ENCODE measurements at regions of chr1 and their contacts with region 1.

Region 1: DNA sequence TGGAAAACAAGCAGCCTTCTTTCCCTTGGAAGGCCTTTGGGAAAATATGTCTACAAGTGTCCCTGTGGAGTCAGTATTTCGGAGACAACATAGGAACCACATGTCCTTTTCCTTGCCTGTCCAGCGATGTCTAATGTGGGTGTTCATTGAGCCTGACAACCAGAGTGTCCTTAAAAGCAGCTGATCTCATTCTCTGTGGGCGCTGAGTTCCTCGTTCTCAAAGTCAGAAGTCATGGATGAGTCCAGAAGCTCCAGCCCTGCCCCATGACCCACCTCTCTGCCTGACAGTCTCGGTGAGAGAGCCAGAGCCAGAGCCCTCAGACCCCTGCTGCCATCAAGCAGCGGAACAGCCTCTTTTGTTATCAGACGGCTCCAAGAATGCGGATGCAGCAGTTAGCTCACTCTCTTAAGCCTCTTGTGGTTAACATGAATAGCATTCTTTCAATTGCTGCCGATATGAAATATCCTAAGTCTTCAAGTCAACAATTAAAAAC is 329.2 kb downstream of the TGFB2 start:
- DNase-seq: peak; percentile 90 to 92
- H3K4me3 ChIP-seq: no peak overlapping the region
- H3K27ac ChIP-seq: no peak overlapping the region
- H3K4me1 ChIP-seq: 0 out of 2 replicates have a peak, but pooled peaks cover 13% of the 10 kb centered on the region
- H3K27me3 ChIP-seq: no peaks in the 10 kb centered on the region
- CTCF ChIP-seq: no peak

Region 2: DNA sequence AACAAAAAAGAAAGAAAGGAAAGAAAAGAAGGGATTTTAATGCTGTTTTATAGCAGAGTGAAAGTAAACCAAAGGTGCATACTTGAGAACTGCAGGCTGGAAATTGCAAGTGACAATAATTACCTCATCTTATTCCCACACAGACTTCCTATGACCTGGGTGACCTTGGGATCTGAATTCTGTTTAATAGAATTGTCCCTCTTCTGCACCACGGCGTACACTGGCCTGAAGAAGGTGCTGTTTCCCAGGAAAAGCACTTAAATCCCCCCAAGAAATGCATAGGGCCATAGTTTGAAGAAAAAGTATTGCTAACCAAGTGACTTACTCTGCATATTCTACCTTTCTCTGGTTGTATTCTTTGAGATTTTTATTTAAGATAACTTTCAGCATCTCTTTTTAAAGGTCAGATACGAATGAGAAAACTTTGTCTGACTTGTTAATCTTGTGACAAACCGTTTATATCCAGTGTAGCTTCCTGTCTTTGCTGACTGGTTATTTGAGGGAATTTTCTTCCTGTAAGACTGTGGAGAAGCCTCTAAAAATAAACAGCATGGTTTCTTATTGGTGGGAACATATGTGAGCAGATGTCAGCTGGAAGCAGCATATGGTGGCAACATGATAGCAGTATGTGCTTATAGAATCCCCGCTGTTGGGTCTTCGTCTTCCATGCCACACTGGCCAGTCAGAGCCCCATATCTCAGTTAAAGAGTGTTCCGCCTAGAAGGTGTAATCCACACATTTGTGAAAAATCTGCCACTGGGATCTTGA is 312.8 kb before region 1 on chr1:
- CTCF ChIA-PET with region 1: no interaction called
- POLR2A ChIA-PET with region 1: no interaction called
- intact Hi-C with region 1: loop called (anchors 1 kb)
- DNase-seq: no peak
- H3K4me3 ChIP-seq: no peak overlapping the region
- H3K27ac ChIP-seq: no peak overlapping the region
- H3K4me1 ChIP-seq: 0 out of 2 replicates have a peak, but pooled peaks cover 6% of the 10 kb centered on the region
- H3K27me3 ChIP-seq: no peaks in the 10 kb centered on the region
- CTCF ChIP-seq: peak; percentile 52

Region 3: DNA sequence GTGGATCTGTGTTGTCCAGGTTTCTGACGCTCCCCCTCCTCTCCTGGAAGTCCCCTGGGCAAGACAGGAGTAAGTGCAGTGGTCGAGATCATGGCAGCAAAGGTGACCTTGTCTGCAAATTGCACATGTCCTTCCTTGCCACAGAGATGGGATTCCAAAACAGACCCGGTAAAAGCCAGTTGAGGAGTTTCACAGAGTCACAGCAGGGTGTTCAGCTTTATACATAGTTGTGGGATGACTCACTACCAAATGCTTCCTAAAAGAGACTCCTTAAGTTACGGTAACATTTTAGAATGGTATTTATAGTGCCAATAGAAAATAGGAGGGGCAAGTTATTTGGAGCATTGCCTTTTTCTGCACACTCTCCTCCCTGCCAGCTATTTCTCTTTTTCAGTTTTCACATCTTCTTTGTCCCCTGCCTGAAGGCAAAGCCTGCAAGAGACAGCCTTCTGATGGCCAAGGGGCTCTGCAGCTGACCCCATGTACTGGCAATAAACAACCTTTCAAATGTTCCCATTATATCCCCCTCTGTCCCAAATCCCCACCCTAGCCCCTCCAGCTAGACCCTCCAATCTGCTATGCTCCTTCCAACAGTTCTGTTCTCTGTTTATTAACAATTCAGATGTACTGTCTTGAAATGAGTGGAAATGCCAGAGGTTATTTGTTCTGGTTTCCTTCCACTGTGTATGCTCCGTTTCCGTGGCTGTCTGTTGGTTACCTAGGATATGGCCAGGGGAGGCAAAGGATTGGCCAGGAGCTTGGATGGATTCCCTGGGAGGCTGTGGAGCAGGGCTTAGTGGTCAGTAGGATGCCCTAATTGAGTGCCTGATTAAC is 214.2 kb before region 1 on chr1:
- CTCF ChIA-PET with region 1: no interaction called
- POLR2A ChIA-PET with region 1: no interaction called
- intact Hi-C with region 1: loop called (anchors 2 kb)
- DNase-seq: peak; percentile 68 to 93
- H3K4me3 ChIP-seq: no peak overlapping the region
- H3K27ac ChIP-seq: peak overlapping the region; percentile 63
- H3K4me1 ChIP-seq: peaks cover 14% of the 10 kb centered on the region
- H3K27me3 ChIP-seq: no peaks in the 10 kb centered on the region
- CTCF ChIP-seq: no peak

Region 4: GRCh38 chr1:218575856-218576255 is 98.5 kb before region 1 on chr1:
- CTCF ChIA-PET with region 1: no interaction called
- POLR2A ChIA-PET with region 1: no interaction called
- intact Hi-C with region 1: no loop called
- DNase-seq: no peak
- H3K4me3 ChIP-seq: no peak overlapping the region
- H3K27ac ChIP-seq: no peak overlapping the region
- H3K4me1 ChIP-seq: no peaks in the 10 kb centered on the region
- H3K27me3 ChIP-seq: no peaks in the 10 kb centered on the region
- CTCF ChIP-seq: no peak

Region 5: GRCh38 chr1:218592688-218593087 is 81.6 kb before region 1 on chr1:
- CTCF ChIA-PET with region 1: no interaction called
- POLR2A ChIA-PET with region 1: no interaction called
- intact Hi-C with region 1: loop called (anchors 1 kb)
- DNase-seq: peak; percentile 41 to 77
- H3K4me3 ChIP-seq: no peak overlapping the region
- H3K27ac ChIP-seq: peak overlapping the region; percentile 52
- H3K4me1 ChIP-seq: peaks cover 15% of the 10 kb centered on the region
- H3K27me3 ChIP-seq: no peaks in the 10 kb centered on the region
- CTCF ChIP-seq: no peak

Region 6: GRCh38 chr1:218660678-218661053 is 13.7 kb before region 1 on chr1:
- CTCF ChIA-PET with region 1: interaction called, 3 read pairs
- POLR2A ChIA-PET with region 1: no interaction called
- intact Hi-C with region 1: loop called (anchors 1 kb)
- DNase-seq: peak; percentile 23 to 84
- H3K4me3 ChIP-seq: no peak overlapping the region
- H3K27ac ChIP-seq: peak overlapping the region; percentile 81
- H3K4me1 ChIP-seq: peaks cover 44% of the 10 kb centered on the region
- H3K27me3 ChIP-seq: no peaks in the 10 kb centered on the region
- CTCF ChIP-seq: no peak